MCF 10A (cell line): ENCODE measurements at regions of chr2 and their contacts with region 1.

Region 1: DNA sequence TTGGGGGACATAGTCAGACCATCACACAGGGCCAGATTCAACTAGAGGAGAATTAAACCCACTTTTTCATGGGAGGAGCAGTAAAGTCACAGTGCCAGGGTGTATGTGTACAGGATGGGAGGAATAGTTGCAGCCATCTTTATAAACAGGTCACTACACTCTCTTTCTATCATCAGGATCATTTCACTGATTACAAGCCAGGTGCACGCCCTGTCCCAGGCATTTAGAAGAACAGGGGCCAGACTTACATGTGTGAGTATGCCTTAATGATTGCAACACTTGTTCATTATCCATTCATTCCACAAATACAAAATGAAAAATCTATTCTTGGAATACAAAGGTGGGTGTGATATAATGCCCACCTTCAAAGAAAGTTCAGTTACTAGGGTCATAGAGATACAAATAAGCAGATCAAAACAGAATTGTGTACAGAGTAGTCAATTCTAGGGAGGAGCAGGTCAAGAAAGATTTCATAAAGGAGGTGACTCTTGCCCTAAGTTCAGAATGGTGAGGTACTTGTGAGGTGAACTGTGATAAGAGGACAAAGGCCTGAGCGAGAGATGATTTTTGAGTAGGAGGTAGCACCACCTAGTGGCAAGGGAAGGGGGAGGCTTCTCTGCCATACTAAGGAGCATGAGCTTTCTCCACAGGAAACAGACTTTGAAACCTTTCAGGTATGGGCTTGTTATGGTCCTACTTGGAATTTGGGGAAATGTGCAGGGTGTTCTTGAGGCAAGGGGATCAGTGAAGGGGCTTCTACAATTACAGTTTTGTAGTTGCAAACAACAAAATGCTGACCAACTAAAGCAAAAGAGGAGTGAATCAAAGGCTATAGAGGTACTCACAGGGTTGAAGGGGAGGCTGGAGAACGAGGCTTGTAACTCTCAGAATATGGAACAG is 156.3 kb downstream of the SUCLG1 start:
- DNase-seq: peak; percentile 77
- H3K4me3 Mint-ChIP-seq: no peak overlapping the region
- H3K27ac Mint-ChIP-seq: no peak overlapping the region
- H3K4me1 Mint-ChIP-seq: peaks cover 6% of the 10 kb centered on the region
- H3K27me3 Mint-ChIP-seq: no peaks in the 10 kb centered on the region
- CTCF ChIP-seq: peak; percentile 83

Region 2: DNA sequence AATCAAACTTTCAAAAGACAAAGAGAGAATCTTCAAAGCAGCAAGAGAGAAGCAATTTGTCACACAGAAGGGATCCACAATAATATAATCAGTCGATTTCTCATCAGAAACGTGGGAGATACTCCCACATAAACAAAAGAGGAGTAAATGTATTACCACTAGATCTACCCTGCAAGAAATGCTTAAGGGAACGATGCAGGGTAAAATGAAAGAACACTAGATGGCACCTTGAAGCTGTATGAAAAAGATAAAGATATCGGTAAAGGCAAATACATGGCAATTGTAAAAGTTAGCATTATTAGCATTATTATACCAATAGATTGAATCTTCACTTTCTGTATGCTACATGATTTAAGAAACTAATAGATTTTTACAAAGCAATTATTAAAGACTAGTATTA is 520.6 kb before region 1 on chr2:
- CTCF ChIA-PET with region 1: interaction called, 5 read pairs
- POLR2A ChIA-PET with region 1: no interaction called
- intact Hi-C with region 1: loop called (anchors 5 kb)
- DNase-seq: peak; percentile 13
- H3K4me3 Mint-ChIP-seq: no peak overlapping the region
- H3K27ac Mint-ChIP-seq: peak overlapping the region; percentile 6
- H3K4me1 Mint-ChIP-seq: no peaks in the 10 kb centered on the region
- H3K27me3 Mint-ChIP-seq: no peaks in the 10 kb centered on the region
- CTCF ChIP-seq: no peak

Region 3: DNA sequence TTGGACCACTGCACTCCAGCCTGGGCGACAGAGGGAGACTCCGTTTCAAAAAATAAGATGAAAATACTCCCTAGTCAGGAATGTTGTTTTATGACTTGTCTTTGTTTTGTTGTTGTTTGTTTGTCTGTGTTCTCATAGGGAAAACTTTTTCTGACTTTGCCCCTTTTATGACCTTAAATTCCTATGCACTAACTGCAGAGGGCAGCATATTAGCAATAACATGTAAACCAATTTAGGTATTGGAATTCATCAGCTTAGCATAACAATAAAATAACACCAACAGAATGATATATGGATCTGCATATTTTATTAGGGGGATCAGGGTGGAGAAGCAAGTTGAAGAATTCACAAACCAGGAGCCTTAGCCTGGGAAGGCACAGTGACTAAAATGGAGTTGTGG is 475.1 kb before region 1 on chr2:
- CTCF ChIA-PET with region 1: interaction called, 11 read pairs
- POLR2A ChIA-PET with region 1: no interaction called
- intact Hi-C with region 1: loop called (anchors 1 kb)
- DNase-seq: peak; percentile 11
- H3K4me3 Mint-ChIP-seq: no peak overlapping the region
- H3K27ac Mint-ChIP-seq: no peak overlapping the region
- H3K4me1 Mint-ChIP-seq: no peaks in the 10 kb centered on the region
- H3K27me3 Mint-ChIP-seq: no peaks in the 10 kb centered on the region
- CTCF ChIP-seq: peak; percentile 19

Region 4: DNA sequence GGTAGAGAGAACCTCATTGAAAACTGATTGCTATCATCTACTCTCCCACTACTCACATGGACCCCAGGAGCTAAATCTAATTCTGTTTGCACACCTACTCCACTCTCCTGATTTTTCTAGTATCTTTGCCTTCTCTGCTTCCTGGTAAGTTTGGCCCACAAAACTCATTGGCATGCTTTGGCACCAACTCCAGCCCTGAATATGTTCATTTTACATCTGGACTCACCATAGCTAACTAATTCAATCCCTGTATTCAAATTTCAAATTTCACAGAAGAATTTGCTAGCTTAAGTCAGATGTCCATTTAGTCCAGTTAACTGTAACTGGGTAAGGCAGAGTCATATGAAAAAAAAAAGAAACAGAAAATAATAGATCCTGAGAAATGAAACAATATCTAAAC is 285.8 kb before region 1 on chr2:
- CTCF ChIA-PET with region 1: interaction called, 17 read pairs
- POLR2A ChIA-PET with region 1: no interaction called
- intact Hi-C with region 1: no loop called
- DNase-seq: no peak
- H3K4me3 Mint-ChIP-seq: no peak overlapping the region
- H3K27ac Mint-ChIP-seq: no peak overlapping the region
- H3K4me1 Mint-ChIP-seq: no peaks in the 10 kb centered on the region
- H3K27me3 Mint-ChIP-seq: no peaks in the 10 kb centered on the region
- CTCF ChIP-seq: no peak

Region 5: DNA sequence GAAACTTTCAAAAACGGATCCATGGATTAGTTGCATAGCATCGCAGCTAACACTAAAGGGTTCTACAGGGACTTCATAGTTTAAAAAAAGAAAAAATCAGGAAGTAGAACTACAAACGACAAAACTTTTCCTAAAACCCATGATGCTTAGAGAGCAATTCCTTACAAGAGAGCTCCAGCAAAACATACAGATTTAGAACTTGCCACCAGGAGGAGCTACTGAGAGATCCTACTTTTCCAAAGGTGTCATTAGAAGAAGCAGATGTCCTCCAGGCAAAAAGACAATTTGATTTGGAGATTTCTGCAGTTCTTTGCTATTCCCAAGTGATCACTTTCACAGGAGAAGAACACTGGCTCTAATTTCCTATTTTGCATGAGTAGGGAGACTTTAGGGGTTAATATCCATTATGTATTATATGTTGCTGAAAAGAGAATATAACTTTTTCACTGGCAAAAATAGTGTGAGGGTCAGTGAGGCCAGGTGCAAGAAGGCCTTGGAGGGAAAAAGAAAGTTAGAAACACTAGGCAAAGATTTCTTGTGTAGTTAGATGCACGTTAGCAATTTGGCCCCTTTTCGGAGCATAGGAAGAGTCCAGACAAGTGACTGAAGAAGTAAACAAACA is 279.8 kb before region 1 on chr2:
- CTCF ChIA-PET with region 1: interaction called, 17 read pairs
- POLR2A ChIA-PET with region 1: interaction called, 4 read pairs
- intact Hi-C with region 1: loop called (anchors 1 kb)
- DNase-seq: peak; percentile 79
- H3K4me3 Mint-ChIP-seq: no peak overlapping the region
- H3K27ac Mint-ChIP-seq: no peak overlapping the region
- H3K4me1 Mint-ChIP-seq: peaks cover 6% of the 10 kb centered on the region
- H3K27me3 Mint-ChIP-seq: no peaks in the 10 kb centered on the region
- CTCF ChIP-seq: peak; percentile 71

Region 6: DNA sequence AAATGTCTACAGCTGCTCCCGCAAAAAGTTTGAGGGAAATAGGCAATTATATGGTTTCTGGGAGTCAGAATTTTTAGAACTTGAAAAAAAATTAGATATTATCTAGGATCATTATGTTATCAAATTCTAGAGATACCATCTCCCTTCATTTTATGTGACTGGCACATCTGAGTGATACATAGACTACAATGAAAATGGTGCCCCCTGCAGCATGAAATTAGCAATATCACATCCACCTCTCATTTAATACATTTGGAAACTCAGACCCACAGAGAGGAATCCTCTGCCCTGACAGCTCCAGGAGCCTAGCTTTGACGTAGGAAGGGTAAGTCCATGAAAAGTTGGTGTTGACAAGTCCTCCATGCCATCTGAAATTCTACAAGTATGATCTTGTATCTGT is 225.3 kb before region 1 on chr2:
- CTCF ChIA-PET with region 1: interaction called, 6 read pairs
- POLR2A ChIA-PET with region 1: no interaction called
- intact Hi-C with region 1: loop called (anchors 1 kb)
- DNase-seq: peak; percentile 67
- H3K4me3 Mint-ChIP-seq: no peak overlapping the region
- H3K27ac Mint-ChIP-seq: no peak overlapping the region
- H3K4me1 Mint-ChIP-seq: no peaks in the 10 kb centered on the region
- H3K27me3 Mint-ChIP-seq: no peaks in the 10 kb centered on the region
- CTCF ChIP-seq: peak; percentile 63

Region 7: GRCh38 chr2:84314901-84315330 is 12.2 kb after region 1 on chr2:
- CTCF ChIA-PET with region 1: interaction called, 68 read pairs
- POLR2A ChIA-PET with region 1: interaction called, 4 read pairs
- intact Hi-C with region 1: no loop called
- DNase-seq: peak; percentile 87
- H3K4me3 Mint-ChIP-seq: no peak overlapping the region
- H3K27ac Mint-ChIP-seq: no peak overlapping the region
- H3K4me1 Mint-ChIP-seq: peaks cover 6% of the 10 kb centered on the region
- H3K27me3 Mint-ChIP-seq: peaks cover 16% of the 10 kb centered on the region
- CTCF ChIP-seq: peak; percentile 92

Region 8: GRCh38 chr2:84338069-84338468 is 35.3 kb after region 1 on chr2:
- CTCF ChIA-PET with region 1: no interaction called
- POLR2A ChIA-PET with region 1: no interaction called
- intact Hi-C with region 1: no loop called
- DNase-seq: peak; percentile 58
- H3K4me3 Mint-ChIP-seq: no peak overlapping the region
- H3K27ac Mint-ChIP-seq: peak overlapping the region; percentile 64
- H3K4me1 Mint-ChIP-seq: no peaks in the 10 kb centered on the region
- H3K27me3 Mint-ChIP-seq: no peaks in the 10 kb centered on the region
- CTCF ChIP-seq: no peak

Region 9: GRCh38 chr2:84676295-84676694 is 373.5 kb after region 1 on chr2:
- CTCF ChIA-PET with region 1: no interaction called
- POLR2A ChIA-PET with region 1: no interaction called
- intact Hi-C with region 1: no loop called
- DNase-seq: no peak
- H3K4me3 Mint-ChIP-seq: no peak overlapping the region
- H3K27ac Mint-ChIP-seq: no peak overlapping the region
- H3K4me1 Mint-ChIP-seq: no peaks in the 10 kb centered on the region
- H3K27me3 Mint-ChIP-seq: no peaks in the 10 kb centered on the region
- CTCF ChIP-seq: no peak